ENCODE measurements at regions of chr12 and their contacts with region 1.

Region 1: DNA sequence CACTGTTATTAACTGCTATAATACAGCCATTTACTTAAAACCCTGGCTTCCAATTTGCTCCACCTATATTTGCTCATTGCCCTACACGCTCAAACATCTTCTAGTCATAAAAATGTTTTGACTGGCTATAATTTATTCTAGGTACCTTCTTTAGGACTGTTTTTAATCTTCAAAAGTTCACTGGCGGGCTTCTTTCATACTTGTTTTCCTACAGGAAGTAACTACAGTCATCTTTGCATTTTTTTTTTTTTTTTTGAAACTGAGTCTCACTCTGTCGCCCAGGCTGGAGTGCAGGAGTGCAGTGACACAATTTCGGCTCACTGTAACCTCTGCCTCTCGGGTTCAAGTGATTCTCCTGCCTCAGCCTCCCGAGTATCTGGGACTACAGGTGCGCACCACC is 32.5 kb downstream of the MPHOSPH9 start:
- DNase-seq: no peak
- H3K4me3 Mint-ChIP-seq: no peak overlapping the region
- H3K27ac Mint-ChIP-seq: peak overlapping the region; percentile 68
- H3K4me1 Mint-ChIP-seq: peaks cover 21% of the 10 kb centered on the region
- H3K27me3 Mint-ChIP-seq: no peaks in the 10 kb centered on the region

Region 2: GRCh38 chr12:123223241-123223668 is 22.8 kb after region 1 on chr12:
- intact Hi-C with region 1: loop called (anchors 1 kb)
- DNase-seq: peak; percentile 65
- H3K4me3 Mint-ChIP-seq: peak overlapping the region; percentile 86
- H3K27ac Mint-ChIP-seq: peak overlapping the region; percentile 96
- H3K4me1 Mint-ChIP-seq: peaks cover 40% of the 10 kb centered on the region
- H3K27me3 Mint-ChIP-seq: no peaks in the 10 kb centered on the region

Region 3: DNA sequence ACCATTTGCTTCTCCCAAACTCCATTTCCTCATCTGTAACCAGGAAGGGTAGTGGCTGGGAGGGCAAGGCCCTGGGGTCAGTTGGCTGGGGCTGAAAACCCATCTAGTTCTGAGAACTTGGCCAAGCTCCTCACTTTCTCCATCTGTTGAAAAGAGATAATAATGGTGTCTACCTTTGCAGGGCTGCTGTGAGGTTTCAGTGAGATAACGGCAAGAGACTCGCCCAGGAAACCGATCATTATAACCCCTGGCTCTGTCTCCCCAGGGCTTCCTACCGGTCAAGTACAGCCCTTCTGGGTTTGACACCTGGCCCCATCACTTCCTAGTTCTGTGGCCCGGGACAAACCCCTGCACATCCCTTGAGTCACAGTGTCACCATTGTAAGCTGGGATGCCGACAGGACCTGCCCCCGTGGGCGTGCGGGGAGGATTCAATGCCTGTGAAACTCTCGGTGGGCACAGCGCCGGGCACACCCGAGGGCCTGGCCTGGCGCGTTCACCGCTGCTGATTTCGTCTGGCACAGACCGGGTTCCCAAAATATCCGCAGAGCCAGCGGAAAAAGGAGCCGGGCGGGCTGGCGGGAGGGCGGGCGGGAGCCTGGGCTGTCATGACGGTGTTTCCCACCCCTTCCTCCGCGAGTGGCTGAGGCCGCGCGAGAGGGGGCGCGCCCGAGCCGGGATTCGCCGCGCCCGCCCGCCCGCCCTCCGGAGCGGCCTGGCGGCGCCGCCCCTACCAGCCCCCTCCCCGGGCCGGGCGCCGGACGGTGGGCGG is 187.9 kb after region 1 on chr12:
- intact Hi-C with region 1: no loop called
- DNase-seq: peak; percentile 78
- H3K4me3 Mint-ChIP-seq: peak overlapping the region; percentile 82
- H3K27ac Mint-ChIP-seq: peak overlapping the region; percentile 93
- H3K4me1 Mint-ChIP-seq: peaks cover 39% of the 10 kb centered on the region
- H3K27me3 Mint-ChIP-seq: no peaks in the 10 kb centered on the region

Measured in activated T-helper 1 cell treated with anti-CD3 and anti-CD28 coated beads, Interleukin-12 subunit alpha, Interleukin-12 subunit beta, Interleukin-2, Interleukin-4 antibody, amounts not matched to agents 30 ng/mL and 10 ng/mL and 1 ng/mL, durations not matched to agents 14 hours and 24 hours and 36 hours (primary cell).